ENCODE measurements at regions of chrX and their contacts with region 1.

Region 1: DNA sequence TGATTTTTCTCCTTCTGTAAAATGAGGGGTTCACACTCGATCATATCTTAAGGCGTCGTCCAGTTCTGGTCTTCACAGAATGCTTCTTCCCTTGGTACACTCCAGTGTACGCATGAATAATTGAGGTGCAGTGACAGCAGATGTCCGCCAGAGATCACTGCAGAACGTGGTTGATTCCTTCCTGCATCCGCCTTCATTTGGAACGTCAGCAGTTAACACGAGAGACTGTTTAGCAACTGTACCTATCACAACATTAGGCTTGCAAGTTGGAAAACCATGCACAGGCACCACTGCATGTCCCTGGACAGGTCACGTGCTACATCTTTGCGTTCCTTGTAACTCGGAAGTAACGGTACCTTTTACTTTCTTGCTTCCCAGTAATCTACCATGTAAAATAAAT is 66.0 kb upstream of the GEMIN8 start:
- DNase-seq: peak; percentile 62
- H3K4me3 ChIP-seq: no peak overlapping the region
- H3K27ac ChIP-seq: no peak overlapping the region
- H3K4me1 ChIP-seq: no peaks in the 10 kb centered on the region
- CTCF ChIP-seq: peak; percentile 74

Region 2: DNA sequence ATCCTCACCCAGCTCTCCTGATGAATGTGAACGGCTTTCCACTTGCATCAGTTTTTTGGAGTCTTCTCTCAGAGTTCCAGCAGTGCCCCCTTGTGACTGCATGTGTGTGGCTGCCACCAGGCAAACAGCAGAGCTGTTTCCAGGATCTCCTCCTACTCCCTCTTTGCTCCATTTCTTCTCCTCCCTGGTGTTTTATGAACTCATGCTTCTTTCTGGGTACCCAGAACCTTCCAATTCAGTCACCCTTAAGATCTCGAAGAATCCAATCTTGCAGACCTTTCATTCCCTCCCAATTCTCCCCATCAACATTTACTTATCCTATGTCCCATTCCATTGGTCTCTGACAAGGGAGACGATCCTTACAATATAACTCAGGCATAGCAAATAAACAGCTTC is 449.6 kb before region 1 on chrX:
- CTCF ChIA-PET with region 1: no interaction called
- POLR2A ChIA-PET with region 1: no interaction called
- intact Hi-C with region 1: no loop called
- DNase-seq: peak; percentile 28
- H3K4me3 ChIP-seq: no peak overlapping the region
- H3K27ac ChIP-seq: no peak overlapping the region
- H3K4me1 ChIP-seq: no peaks in the 10 kb centered on the region
- CTCF ChIP-seq: peak; percentile 66

Region 3: GRCh38 chrX:15143050-15143824 is 1047.5 kb after region 1 on chrX:
- CTCF ChIA-PET with region 1: no interaction called
- POLR2A ChIA-PET with region 1: no interaction called
- intact Hi-C with region 1: loop called (anchors 1 kb)
- DNase-seq: peak; percentile 46
- H3K4me3 ChIP-seq: no peak overlapping the region
- H3K27ac ChIP-seq: no peak overlapping the region
- H3K4me1 ChIP-seq: no peaks in the 10 kb centered on the region
- CTCF ChIP-seq: peak; percentile 85

Measured in OCI-LY7 (cell line).